ENCODE measurements at regions of chr7 and their contacts with region 1.

Region 1: DNA sequence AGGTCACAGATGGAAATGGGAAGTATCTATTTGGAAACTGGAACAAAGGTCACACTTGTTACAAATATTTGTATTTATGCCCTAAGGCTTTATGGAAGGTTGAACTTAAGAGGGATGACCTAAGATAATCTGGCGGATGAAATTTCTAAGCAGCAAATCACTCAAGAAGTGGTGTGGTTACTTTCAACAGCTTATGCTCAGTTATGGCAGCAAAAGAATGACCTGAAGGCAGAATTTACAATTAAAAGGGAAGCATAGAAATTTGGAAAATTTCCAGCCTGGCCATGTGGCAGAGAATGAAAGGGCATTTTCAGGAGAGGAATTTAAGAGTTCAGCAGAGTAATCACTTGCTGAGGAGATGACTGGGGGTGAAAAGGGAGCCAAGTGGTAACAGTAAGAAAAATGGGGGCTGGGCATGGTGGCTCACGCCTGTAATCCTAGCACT is 95.8 kb upstream of the TNS3 start:
- DNase-seq: no peak
- H3K4me3 ChIP-seq: no peak overlapping the region
- H3K4me3 Mint-ChIP-seq: no peak overlapping the region
- H3K27ac Mint-ChIP-seq: peak overlapping the region; percentile 48
- H3K4me1 ChIP-seq: peaks cover 29% of the 10 kb centered on the region
- H3K4me1 Mint-ChIP-seq: peaks cover 47% of the 10 kb centered on the region
- H3K27me3 ChIP-seq: no peaks in the 10 kb centered on the region
- H3K27me3 Mint-ChIP-seq: no peaks in the 10 kb centered on the region
- CTCF ChIP-seq: no peak

Region 2: GRCh38 chr7:47693120-47693601 is 15.5 kb after region 1 on chr7:
- CTCF ChIA-PET with region 1: no interaction called
- POLR2A ChIA-PET with region 1: no interaction called
- intact Hi-C with region 1: loop called (anchors 2 kb)
- DNase-seq: peak in 1 of 2 experiments; percentile 45
- H3K4me3 ChIP-seq: no peak overlapping the region
- H3K4me3 Mint-ChIP-seq: no peak overlapping the region
- H3K27ac Mint-ChIP-seq: peak overlapping the region; percentile 19
- H3K4me1 ChIP-seq: peaks cover 16% of the 10 kb centered on the region
- H3K4me1 Mint-ChIP-seq: peaks cover 22% of the 10 kb centered on the region
- H3K27me3 ChIP-seq: no peaks in the 10 kb centered on the region
- H3K27me3 Mint-ChIP-seq: no peaks in the 10 kb centered on the region
- CTCF ChIP-seq: no peak

Region 3: GRCh38 chr7:47743965-47744591 is 66.4 kb after region 1 on chr7:
- CTCF ChIA-PET with region 1: no interaction called
- POLR2A ChIA-PET with region 1: no interaction called
- intact Hi-C with region 1: no loop called
- DNase-seq: no peak
- H3K4me3 ChIP-seq: no peak overlapping the region
- H3K4me3 Mint-ChIP-seq: no peak overlapping the region
- H3K27ac Mint-ChIP-seq: no peak overlapping the region
- H3K4me1 ChIP-seq: peaks cover 2% of the 10 kb centered on the region; the same call in 1 of the 2 replicates
- H3K4me1 Mint-ChIP-seq: peaks cover 20% of the 10 kb centered on the region
- H3K27me3 ChIP-seq: no peaks in the 10 kb centered on the region
- H3K27me3 Mint-ChIP-seq: no peaks in the 10 kb centered on the region
- CTCF ChIP-seq: no peak